CD4-positive, alpha-beta memory T cell (primary cell): ENCODE measurements at regions of chr4 and their contacts with region 1.

Region 1: DNA sequence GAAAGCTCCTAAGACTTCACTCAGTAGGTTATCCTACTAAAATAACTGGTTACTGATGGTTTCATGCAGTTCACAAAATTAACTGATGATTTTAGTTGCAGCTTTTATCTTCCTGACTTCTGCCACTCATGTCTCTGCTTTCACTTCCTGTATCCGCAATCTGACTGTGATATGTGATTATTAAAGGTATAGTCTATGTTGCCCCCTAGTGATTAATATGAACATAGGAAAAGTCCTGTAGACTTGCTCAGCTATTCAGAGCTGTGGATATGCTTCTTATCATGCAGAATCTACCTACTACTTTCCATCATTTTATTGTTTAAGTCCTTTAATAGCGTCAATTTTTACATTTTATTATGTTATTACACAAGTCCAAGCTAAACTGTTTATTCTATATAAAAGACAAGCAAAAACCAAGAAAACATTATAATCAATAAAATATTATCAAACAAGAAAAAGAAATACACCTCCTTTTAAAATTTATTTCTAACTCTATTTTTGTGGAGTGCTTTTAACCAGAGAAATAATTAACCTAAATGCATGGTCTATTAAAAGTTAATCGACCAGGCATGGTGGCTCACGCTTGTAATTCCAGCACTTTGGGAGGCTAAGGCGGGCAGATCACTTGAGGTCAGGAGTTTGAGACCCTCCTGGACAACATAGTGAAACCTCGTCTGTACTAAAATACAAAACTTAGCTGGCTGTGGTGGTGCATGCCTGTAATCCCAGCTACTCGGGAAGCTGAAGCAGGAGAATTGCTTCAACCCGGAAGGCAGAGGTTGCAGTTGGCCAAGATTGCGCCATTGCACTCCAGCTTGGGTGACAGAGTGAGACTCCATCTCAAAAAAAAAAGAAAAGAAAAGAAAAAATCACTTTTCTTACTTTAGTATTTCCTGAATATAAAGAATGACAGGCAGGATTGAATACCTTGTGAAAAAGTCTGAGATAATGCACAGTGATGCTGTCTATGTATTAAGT is 40.4 kb upstream of the TLR2 start:
- DNase-seq: peak in 4 of 5 donors; percentile 54 to 65 (median 62)
- H3K4me3 ChIP-seq: no peak overlapping the region
- H3K4me3 Mint-ChIP-seq: peak overlapping the region in 3 of 8 donors; percentile 8 to 62 (median 35)
- H3K27ac ChIP-seq: no peak overlapping the region
- H3K27ac Mint-ChIP-seq: peak overlapping the region in 3 of 7 donors; percentile 19 to 93 (median 46)
- H3K4me1 ChIP-seq: peaks cover 6% of the 10 kb centered on the region
- H3K4me1 Mint-ChIP-seq: peaks cover 7 to 15% (median 10%) of the 10 kb centered on the region in 4 donors
- H3K27me3 ChIP-seq: no peaks in the 10 kb centered on the region
- H3K27me3 Mint-ChIP-seq: no peaks in the 10 kb centered on the region

Region 2: GRCh38 chr4:152843481-152844090 is 800.1 kb before region 1 on chr4:
- CTCF ChIA-PET with region 1: no interaction called
- POLR2A ChIA-PET with region 1: no interaction called
- intact Hi-C with region 1: loop called (anchors 10 kb)
- DNase-seq: no peak
- H3K4me3 ChIP-seq: no peak overlapping the region
- H3K4me3 Mint-ChIP-seq: no peak overlapping the region
- H3K27ac ChIP-seq: no peak overlapping the region
- H3K27ac Mint-ChIP-seq: no peak overlapping the region
- H3K4me1 ChIP-seq: peaks cover 14% of the 10 kb centered on the region
- H3K4me1 Mint-ChIP-seq: peaks cover 14 to 23% (median 21%) of the 10 kb centered on the region in 4 donors
- H3K27me3 ChIP-seq: no peaks in the 10 kb centered on the region
- H3K27me3 Mint-ChIP-seq: no peaks in the 10 kb centered on the region

Region 3: GRCh38 chr4:153142700-153143438 is 500.8 kb before region 1 on chr4:
- CTCF ChIA-PET with region 1: interaction called, 17 read pairs
- POLR2A ChIA-PET with region 1: interaction called, 4 read pairs
- intact Hi-C with region 1: loop called (anchors 1 kb)
- DNase-seq: peak; percentile 63 to 68 (median 64)
- H3K4me3 ChIP-seq: no peak overlapping the region
- H3K4me3 Mint-ChIP-seq: no peak overlapping the region
- H3K27ac ChIP-seq: no peak overlapping the region
- H3K27ac Mint-ChIP-seq: no peak overlapping the region
- H3K4me1 ChIP-seq: peaks cover 4% of the 10 kb centered on the region
- H3K4me1 Mint-ChIP-seq: peaks cover 0 to 12% (median 5%) of the 10 kb centered on the region in 4 donors
- H3K27me3 ChIP-seq: no peaks in the 10 kb centered on the region
- H3K27me3 Mint-ChIP-seq: no peaks in the 10 kb centered on the region

Region 4: GRCh38 chr4:153249199-153250041 is 394.3 kb before region 1 on chr4:
- CTCF ChIA-PET with region 1: no interaction called
- POLR2A ChIA-PET with region 1: no interaction called
- intact Hi-C with region 1: loop called (anchors 10 kb)
- DNase-seq: peak; percentile 86 to 90 (median 87)
- H3K4me3 ChIP-seq: peak overlapping the region; percentile 63 to 64
- H3K4me3 Mint-ChIP-seq: peak overlapping the region; percentile 89 to 95 (median 94)
- H3K27ac ChIP-seq: peak overlapping the region; percentile 73
- H3K27ac Mint-ChIP-seq: peak overlapping the region; percentile 89 to 97 (median 97)
- H3K4me1 ChIP-seq: peaks cover 17% of the 10 kb centered on the region
- H3K4me1 Mint-ChIP-seq: peaks cover 17 to 43% (median 31%) of the 10 kb centered on the region in 4 donors
- H3K27me3 ChIP-seq: no peaks in the 10 kb centered on the region
- H3K27me3 Mint-ChIP-seq: peaks cover 0 to 2% of the 10 kb centered on the region in 2 donors